ENCODE measurements at regions of chr3 and their contacts with region 1.

Region 1: DNA sequence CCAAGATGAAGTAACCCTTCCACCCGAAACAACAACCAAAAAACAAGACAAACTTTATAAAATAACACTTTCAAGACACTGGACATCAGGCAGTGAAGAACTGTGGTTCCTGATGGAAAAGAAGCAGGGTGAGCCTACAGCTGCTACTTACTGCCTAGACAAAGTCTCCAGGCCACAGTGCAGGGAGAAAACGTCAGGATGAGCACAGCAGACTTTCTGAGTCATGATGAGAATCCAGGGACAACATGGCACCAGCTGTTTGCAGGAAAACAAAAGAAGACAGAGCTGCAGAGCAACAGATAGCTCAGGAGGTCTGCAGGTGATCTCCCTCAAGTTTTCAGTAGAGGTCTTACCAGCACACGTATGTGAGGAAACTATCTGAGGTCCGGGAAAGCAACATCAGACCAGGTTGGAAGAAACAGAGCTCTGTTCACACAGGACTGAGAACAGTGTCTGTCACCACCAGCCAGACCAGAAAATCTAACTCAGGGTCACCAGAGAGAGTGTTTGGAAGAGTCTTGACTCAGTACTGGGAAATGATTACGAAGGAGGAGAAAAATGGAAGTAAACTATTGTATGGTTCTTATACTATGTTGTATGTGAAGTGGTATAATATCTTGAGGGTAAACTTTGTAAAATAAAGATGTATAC is 108.9 kb downstream of the ANO10 start:
- DNase-seq: no peak
- ATAC-seq: no peak
- H3K4me3 ChIP-seq: no peak overlapping the region
- H3K27ac ChIP-seq: no peak overlapping the region
- H3K4me1 ChIP-seq: no peaks in the 10 kb centered on the region
- H3K27me3 ChIP-seq: no peaks in the 10 kb centered on the region
- CTCF ChIP-seq: no peak

Region 2: GRCh38 chr3:42946050-42946449 is 566.8 kb before region 1 on chr3:
- intact Hi-C with region 1: loop called in 1 of 2 experiments (anchors 10 kb)
- DNase-seq: no peak
- ATAC-seq: no peak
- H3K4me3 ChIP-seq: no peak overlapping the region
- H3K27ac ChIP-seq: no peak overlapping the region
- H3K4me1 ChIP-seq: no peaks in the 10 kb centered on the region
- H3K27me3 ChIP-seq: no peaks in the 10 kb centered on the region
- CTCF ChIP-seq: no peak